ENCODE measurements at regions of chr1 and their contacts with region 1.

Region 1: GRCh38 chr1:90964444-90965035 is 57.3 kb downstream of the ZNF644 start:
- DNase-seq: no peak
- H3K4me3 Mint-ChIP-seq: no peak overlapping the region
- H3K27ac Mint-ChIP-seq: no peak overlapping the region
- H3K4me1 Mint-ChIP-seq: peaks cover 42% of the 10 kb centered on the region
- H3K27me3 Mint-ChIP-seq: no peaks in the 10 kb centered on the region
- CTCF ChIP-seq: peak; percentile 26

Region 2: DNA sequence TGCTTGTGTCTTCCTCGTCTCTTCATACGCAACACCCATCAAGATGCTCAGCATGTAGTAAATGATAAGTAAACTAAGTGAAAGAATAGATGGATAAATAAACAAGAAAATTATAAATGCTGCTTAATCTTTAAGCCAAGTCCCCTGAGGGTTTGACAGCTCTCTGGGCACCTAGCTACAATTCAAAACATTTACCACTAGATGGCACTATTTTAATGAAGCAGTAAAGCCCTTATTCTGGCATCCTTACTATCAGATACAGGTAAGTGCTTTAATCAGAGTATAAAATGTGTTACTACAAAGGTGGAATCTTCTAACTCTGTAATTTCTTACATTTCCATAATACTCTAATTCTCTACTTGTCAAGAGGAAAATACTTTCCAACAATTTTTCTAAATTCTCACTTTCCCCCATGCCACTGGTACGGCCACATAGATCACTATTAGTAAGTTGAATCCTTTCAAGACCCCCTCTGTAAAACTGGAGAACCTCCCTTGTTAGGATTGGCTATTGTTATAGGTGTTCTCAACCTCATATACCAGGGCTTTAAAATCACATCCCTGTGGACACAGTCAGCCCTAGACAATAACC is 385.2 kb before region 1 on chr1:
- CTCF ChIA-PET with region 1: no interaction called
- intact Hi-C with region 1: loop called (anchors 2 kb)
- DNase-seq: no peak
- H3K4me3 Mint-ChIP-seq: no peak overlapping the region
- H3K27ac Mint-ChIP-seq: no peak overlapping the region
- H3K4me1 Mint-ChIP-seq: no peaks in the 10 kb centered on the region
- H3K27me3 Mint-ChIP-seq: peaks cover 30% of the 10 kb centered on the region
- CTCF ChIP-seq: peak; percentile 35

Region 3: GRCh38 chr1:90616395-90616794 is 348.1 kb before region 1 on chr1:
- CTCF ChIA-PET with region 1: no interaction called
- intact Hi-C with region 1: loop called (anchors 10 kb)
- DNase-seq: peak; percentile 28
- H3K4me3 Mint-ChIP-seq: no peak overlapping the region
- H3K27ac Mint-ChIP-seq: no peak overlapping the region
- H3K4me1 Mint-ChIP-seq: no peaks in the 10 kb centered on the region
- H3K27me3 Mint-ChIP-seq: no peaks in the 10 kb centered on the region
- CTCF ChIP-seq: peak; percentile 21

Region 4: DNA sequence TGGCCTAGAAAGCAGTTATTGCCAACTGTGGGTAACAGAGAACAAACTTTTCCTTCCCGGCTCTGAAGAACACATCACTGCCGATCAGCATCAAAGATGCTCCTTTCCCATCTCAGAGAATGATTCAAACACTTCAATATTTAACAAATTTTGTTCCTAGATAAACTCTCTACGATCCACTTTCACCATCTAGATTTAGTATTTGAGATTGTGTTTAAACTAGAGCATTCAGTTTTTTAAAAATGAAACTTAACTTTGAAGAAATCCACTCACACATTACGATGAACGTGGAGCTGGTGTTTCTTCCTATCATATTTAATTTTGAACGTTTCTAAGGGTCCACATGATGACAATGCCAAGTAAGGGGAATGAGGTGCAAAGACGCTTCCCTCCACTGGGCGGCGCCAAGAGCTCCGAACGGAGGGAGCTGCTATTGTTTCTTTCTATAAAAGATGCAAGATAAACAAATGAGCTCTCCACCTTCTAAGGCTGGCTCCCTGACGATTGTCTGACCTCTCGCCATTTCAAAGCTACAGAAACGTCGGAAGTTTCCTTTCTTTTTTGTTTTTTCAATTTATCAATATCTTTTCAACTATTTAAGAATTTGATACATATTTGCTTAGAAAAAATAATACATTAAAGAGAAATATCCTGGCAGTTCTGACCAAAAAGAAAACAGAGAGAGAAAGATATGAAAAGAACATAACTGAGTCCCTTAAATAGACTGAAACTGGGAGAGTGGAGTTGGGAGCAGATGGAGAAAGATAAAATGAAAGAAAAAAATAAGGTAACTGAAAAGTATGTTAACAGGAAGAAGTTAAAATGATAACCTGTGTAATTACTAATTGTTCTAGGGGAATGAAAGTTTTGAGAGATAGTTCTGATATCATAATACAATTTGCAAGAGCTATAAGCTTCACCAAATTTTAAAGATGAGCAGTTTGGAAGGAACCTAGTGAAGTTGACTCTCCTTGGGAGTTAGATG is 243.0 kb before region 1 on chr1:
- CTCF ChIA-PET with region 1: interaction called, 19 read pairs
- intact Hi-C with region 1: loop called (anchors 1 kb)
- DNase-seq: peak; percentile 71
- H3K4me3 Mint-ChIP-seq: no peak overlapping the region
- H3K27ac Mint-ChIP-seq: no peak overlapping the region
- H3K4me1 Mint-ChIP-seq: no peaks in the 10 kb centered on the region
- H3K27me3 Mint-ChIP-seq: no peaks in the 10 kb centered on the region
- CTCF ChIP-seq: peak; percentile 80

Region 5: DNA sequence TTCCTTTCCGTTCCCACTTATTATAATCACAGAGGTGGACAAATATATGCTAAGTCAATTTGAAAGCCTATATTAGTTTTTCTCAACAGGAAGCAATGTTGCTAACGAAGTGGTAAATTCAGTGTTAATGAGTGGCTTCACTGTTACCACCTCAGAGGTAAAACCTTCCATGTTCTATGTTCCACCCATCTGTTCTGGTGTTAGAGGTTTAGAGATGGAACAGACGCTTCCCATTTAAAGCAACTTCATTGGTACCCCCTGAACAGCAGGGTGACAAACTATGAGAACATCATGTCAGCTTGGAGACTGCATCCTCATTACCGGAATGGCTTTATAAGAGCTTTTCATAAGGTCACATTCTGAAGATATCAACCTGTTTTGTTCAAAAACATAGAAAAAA is 20.6 kb before region 1 on chr1:
- CTCF ChIA-PET with region 1: no interaction called
- intact Hi-C with region 1: no loop called
- DNase-seq: no peak
- H3K4me3 Mint-ChIP-seq: no peak overlapping the region
- H3K27ac Mint-ChIP-seq: no peak overlapping the region
- H3K4me1 Mint-ChIP-seq: no peaks in the 10 kb centered on the region
- H3K27me3 Mint-ChIP-seq: no peaks in the 10 kb centered on the region
- CTCF ChIP-seq: no peak

Measured in Calu3 (cell line).